ENCODE measurements at regions of chr1 and their contacts with region 1.

Region 1: DNA sequence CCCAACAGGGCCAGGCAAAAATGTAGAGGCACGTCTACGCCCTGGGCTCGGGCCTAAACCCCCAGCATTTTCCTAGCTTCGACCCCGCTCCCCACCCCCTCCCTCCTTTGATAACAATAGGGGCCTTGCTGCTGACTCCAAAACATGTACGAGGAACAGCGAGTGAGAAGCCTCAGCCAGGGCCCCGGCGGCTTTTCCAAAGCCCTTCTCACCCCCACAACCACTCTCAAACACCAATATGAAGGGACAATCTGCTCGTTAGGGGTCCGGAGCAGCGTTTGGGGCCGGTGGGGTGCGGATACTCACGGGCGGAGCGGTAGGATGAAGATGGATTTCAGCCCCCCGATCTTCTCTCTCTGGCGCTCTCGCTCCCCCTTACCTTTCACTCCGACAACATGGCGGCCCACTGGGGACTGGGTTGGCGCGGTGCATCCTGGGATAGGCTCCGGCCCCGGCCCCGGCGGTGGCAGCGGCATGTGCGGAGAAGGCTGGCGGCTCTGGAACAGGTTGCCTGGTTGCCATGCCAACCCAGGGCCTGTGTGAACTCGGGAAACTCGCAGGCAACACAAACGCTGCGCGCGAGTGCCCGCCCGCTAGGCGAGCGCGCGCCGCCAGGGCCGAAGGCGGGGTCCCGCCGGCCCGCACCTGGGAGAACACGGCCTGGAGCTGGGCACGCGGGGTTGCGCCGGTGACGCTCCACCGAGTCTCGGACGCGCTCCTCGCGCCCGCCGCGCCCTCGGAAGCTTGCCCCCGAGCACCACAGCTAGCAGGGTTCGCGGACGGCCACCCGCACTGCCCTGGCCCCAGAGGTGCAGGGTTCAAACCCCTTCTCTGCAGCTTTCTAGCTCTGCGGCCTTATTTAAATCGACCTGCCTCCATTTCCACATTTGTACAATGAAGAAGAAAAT is at the start of gene PUM1:
- DNase-seq: peak; percentile 99
- ATAC-seq: peak; percentile 97
- H3K4me3 Mint-ChIP-seq: peak within 1 kb of the TSS; percentile 92
- H3K27ac Mint-ChIP-seq: peak within 1 kb of the TSS; percentile 99
- H3K4me1 Mint-ChIP-seq: peaks cover 22% of the 10 kb centered on the region
- H3K27me3 Mint-ChIP-seq: no peaks in the 10 kb centered on the region
- total RNA-seq, gene PUM1: 87.1 to 91.4 TPM

Region 2: GRCh38 chr1:30743584-30744059 is 321.9 kb before region 1 on chr1:
- CTCF ChIA-PET with region 1: no interaction called
- POLR2A ChIA-PET with region 1: no interaction called
- intact Hi-C with region 1: loop called in 1 of 2 experiments (anchors 5 kb)
- DNase-seq: peak; percentile 81
- ATAC-seq: peak; percentile 78
- H3K4me3 Mint-ChIP-seq: peak overlapping the region; percentile 59
- H3K27ac Mint-ChIP-seq: peak overlapping the region; percentile 99
- H3K4me1 Mint-ChIP-seq: peaks cover 91% of the 10 kb centered on the region
- H3K27me3 Mint-ChIP-seq: no peaks in the 10 kb centered on the region

Region 3: GRCh38 chr1:31010086-31010989 is 55.2 kb before region 1 on chr1:
- CTCF ChIA-PET with region 1: interaction called, 4 read pairs
- POLR2A ChIA-PET with region 1: interaction called, 19 read pairs
- intact Hi-C with region 1: loop called (anchors 1 to 2 kb)
- DNase-seq: peak; percentile 60
- ATAC-seq: peak; percentile 98
- H3K4me3 Mint-ChIP-seq: no peak overlapping the region
- H3K27ac Mint-ChIP-seq: peak overlapping the region; percentile 88
- H3K4me1 Mint-ChIP-seq: peaks cover 68% of the 10 kb centered on the region
- H3K27me3 Mint-ChIP-seq: no peaks in the 10 kb centered on the region

Region 4: DNA sequence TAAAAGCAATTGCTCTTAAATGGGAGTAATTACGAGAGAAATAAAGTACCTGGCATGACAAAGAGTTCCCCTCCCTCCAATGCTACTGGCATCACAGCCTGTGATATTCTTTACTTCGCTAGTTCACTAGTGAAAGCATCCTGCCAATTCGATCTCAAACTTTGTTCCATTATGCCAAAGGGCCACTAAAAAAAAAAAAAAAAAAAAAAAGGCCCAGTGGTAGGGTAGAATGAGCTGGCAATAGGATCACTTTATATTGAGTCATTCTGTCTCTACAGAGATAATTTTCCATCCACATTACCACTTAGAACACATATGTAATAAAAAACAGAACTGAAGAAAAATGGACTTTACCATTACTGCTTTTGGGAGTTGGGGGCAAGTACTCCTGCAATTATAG is 11.2 kb before region 1 on chr1:
- CTCF ChIA-PET with region 1: no interaction called
- POLR2A ChIA-PET with region 1: interaction called, 3 read pairs
- intact Hi-C with region 1: loop called (anchors 1 kb)
- DNase-seq: peak; percentile 21
- ATAC-seq: peak; percentile 79
- H3K4me3 Mint-ChIP-seq: no peak overlapping the region
- H3K27ac Mint-ChIP-seq: peak overlapping the region; percentile 74
- H3K4me1 Mint-ChIP-seq: peaks cover 63% of the 10 kb centered on the region
- H3K27me3 Mint-ChIP-seq: no peaks in the 10 kb centered on the region

Region 5: DNA sequence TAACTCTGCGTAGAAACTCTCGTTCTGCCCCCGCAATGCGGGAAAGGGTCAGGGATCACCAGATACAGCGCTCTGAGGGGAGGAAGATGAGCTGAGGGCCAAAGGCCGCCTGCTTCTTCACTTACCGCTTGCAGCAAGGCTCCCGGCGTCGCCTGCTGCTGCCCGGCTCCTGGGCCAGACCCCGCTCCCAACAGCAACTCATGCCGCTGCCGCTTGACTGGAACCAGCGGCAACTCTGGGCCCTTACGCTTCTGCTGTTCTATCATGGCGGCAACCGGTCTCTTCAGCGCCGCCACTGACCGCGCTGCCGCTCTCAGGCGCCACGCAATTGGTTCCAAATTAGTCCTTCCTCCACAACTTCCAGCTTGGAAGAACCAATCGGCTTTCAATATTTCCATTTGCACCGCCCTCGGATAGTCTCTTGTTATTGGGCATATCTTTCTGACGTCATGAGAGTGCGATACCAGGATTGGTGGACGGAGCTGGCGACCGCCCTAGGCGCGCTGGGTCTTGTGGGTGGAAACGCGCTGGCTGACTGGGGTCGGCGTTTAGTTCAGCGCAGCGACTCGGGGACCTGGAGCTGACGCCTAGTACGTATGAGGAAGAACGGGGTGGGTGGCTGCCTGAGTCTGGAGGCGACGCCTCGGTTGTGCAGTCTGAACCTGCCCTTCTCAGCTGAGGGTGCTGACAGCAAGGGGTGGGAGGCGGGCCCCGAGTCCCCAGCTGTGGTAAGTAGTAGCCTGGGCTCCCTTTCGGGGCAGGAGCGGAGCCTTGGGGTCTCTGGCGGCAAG is 231.1 kb after region 1 on chr1 and contains the starts of genes SNRNP40 and ZCCHC17:
- CTCF ChIA-PET with region 1: no interaction called
- POLR2A ChIA-PET with region 1: interaction called, 5 read pairs
- intact Hi-C with region 1: loop called (anchors 1 to 10 kb)
- DNase-seq: peak; percentile 94
- ATAC-seq: peak; percentile 98
- H3K4me3 Mint-ChIP-seq: no peak within 1 kb of the TSS
- H3K27ac Mint-ChIP-seq: no peak within 1 kb of the TSS
- H3K4me1 Mint-ChIP-seq: peaks cover 34% of the 10 kb centered on the region
- H3K27me3 Mint-ChIP-seq: no peaks in the 10 kb centered on the region
- total RNA-seq, gene SNRNP40: 101 to 111 TPM
- total RNA-seq, gene ZCCHC17: 23.9 to 28.8 TPM

Region 6: DNA sequence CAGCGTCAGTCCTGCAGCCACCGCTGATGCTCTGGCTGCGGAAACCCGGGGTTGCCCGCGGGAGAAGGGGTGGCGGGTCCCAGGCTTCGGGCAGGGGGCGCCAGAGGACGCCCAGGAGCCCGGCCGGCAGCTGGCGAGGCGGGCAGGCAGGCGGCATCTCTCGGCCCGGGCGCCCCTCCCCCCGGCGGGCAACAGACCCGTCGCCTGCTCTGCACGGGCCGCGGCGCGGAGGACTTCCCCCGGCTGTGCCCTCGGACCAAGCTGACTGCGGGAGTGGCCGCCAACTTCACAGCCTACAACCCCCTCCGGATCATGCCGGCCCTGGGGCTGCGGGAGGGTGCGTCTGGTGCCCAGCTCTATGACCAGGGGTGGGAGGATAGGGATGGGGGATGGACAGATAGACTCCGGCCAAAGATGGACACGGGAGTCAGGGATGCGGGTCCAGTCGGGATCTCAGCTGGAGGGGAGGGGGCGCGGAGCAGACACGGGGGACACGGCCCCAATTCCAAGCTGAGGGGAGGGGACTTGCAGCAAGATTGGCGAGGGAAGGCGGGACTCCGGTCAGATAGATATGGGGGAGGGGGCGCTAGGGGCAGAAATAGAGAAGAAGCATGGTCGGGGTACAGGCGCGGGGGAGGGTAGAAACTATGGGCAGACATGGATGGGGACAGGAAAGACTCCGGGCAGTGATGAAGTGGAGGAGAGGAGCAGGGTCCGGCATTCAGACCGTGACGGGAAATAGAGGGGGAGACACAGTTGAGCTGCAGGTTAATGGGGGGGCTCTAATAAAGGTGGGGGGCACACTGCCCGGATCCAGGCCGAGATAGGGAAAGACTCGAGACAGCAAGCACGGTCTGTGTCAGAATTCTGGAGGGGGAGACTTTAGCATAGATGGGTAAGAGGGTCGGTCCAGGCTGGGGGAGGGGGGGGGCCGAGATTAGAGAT is 697.4 kb after region 1 on chr1:
- CTCF ChIA-PET with region 1: no interaction called
- POLR2A ChIA-PET with region 1: no interaction called
- intact Hi-C with region 1: loop called in 1 of 2 experiments (anchors 10 kb)
- DNase-seq: peak; percentile 87
- ATAC-seq: peak; percentile 65
- H3K4me3 Mint-ChIP-seq: peak overlapping the region; percentile 65
- H3K27ac Mint-ChIP-seq: no peak overlapping the region
- H3K4me1 Mint-ChIP-seq: peaks cover 26% of the 10 kb centered on the region
- H3K27me3 Mint-ChIP-seq: peaks cover 15% of the 10 kb centered on the region

Measured in activated CD4-positive, alpha-beta T cell treated with anti-CD3 and anti-CD28 coated beads for 36 hours (primary cell).